Endothelial cell of umbilical vein (primary cell): ENCODE measurements at regions of chr2 and their contacts with region 1.

Region 1: GRCh38 chr2:20446917-20447436 is at the start of gene RHOB:
- DNase-seq: peak; percentile 99
- H3K4me3 ChIP-seq: peak within 1 kb of the TSS; percentile 66 to 96 (median 94)
- H3K27ac ChIP-seq: peak within 1 kb of the TSS; percentile 79
- H3K4me1 ChIP-seq: peaks cover 27% of the 10 kb centered on the region
- H3K27me3 ChIP-seq: no peaks in the 10 kb centered on the region
- CTCF ChIP-seq: no peak
- POLR2A ChIP-seq: peak; percentile 100
- total RNA-seq, gene RHOB: 830 and 937 TPM in 2 replicates

Region 2: DNA sequence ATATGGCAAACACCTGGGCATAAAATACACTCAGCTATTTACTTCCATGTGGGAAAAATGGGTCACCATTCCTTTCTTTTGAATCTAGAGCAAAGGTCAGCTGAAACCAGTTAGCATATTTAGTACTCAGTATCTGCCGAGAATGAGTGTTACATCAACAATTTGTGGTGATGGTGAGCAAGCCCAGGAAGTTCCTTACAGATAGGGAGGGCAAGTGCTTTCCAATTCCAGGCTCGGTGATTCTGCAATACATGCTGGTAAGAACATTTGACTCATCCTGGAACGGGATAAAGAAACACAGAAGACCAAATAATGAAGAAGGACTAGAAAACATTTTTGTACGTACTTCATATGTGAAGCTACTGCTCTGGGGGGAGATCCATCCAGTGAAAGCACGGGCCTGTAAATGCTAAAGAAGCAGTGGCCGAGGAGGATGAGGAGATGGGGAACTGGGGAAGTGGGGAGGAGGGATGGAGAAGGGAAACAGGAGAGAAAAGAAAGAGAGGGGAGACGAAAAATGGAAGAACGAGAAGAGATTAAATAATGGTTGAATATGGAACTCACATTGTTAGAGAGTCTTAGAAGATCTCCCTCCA is 797.1 kb before region 1 on chr2:
- CTCF ChIA-PET with region 1: no interaction called
- POLR2A ChIA-PET with region 1: no interaction called
- dilution Hi-C with region 1: no loop called
- intact Hi-C with region 1: no loop called
- DNase-seq: peak; percentile 22
- H3K4me3 ChIP-seq: no peak overlapping the region
- H3K27ac ChIP-seq: no peak overlapping the region
- H3K4me1 ChIP-seq: no peaks in the 10 kb centered on the region
- H3K27me3 ChIP-seq: no peaks in the 10 kb centered on the region
- CTCF ChIP-seq: no peak
- POLR2A ChIP-seq: no peak

Region 3: GRCh38 chr2:20398956-20399567 is 47.9 kb before region 1 on chr2:
- CTCF ChIA-PET with region 1: interaction called, 7 read pairs
- POLR2A ChIA-PET with region 1: no interaction called
- dilution Hi-C with region 1: no loop called
- intact Hi-C with region 1: loop called (anchors 1 kb)
- DNase-seq: no peak
- H3K4me3 ChIP-seq: no peak overlapping the region
- H3K27ac ChIP-seq: no peak overlapping the region
- H3K4me1 ChIP-seq: no peaks in the 10 kb centered on the region
- H3K27me3 ChIP-seq: peaks cover 21% of the 10 kb centered on the region in 2 experiments
- CTCF ChIP-seq: no peak
- POLR2A ChIP-seq: no peak

Region 4: GRCh38 chr2:20568501-20569463 is 121.8 kb after region 1 on chr2:
- CTCF ChIA-PET with region 1: interaction called, 78 read pairs
- POLR2A ChIA-PET with region 1: interaction called, 310 read pairs
- dilution Hi-C with region 1: no loop called
- intact Hi-C with region 1: loop called (anchors 1 kb)
- DNase-seq: peak; percentile 98
- H3K4me3 ChIP-seq: no peak overlapping the region
- H3K27ac ChIP-seq: peak overlapping the region; percentile 100
- H3K4me1 ChIP-seq: peaks cover 72% of the 10 kb centered on the region
- H3K27me3 ChIP-seq: no peaks in the 10 kb centered on the region
- CTCF ChIP-seq: no peak
- POLR2A ChIP-seq: peak; percentile 72

Region 5: DNA sequence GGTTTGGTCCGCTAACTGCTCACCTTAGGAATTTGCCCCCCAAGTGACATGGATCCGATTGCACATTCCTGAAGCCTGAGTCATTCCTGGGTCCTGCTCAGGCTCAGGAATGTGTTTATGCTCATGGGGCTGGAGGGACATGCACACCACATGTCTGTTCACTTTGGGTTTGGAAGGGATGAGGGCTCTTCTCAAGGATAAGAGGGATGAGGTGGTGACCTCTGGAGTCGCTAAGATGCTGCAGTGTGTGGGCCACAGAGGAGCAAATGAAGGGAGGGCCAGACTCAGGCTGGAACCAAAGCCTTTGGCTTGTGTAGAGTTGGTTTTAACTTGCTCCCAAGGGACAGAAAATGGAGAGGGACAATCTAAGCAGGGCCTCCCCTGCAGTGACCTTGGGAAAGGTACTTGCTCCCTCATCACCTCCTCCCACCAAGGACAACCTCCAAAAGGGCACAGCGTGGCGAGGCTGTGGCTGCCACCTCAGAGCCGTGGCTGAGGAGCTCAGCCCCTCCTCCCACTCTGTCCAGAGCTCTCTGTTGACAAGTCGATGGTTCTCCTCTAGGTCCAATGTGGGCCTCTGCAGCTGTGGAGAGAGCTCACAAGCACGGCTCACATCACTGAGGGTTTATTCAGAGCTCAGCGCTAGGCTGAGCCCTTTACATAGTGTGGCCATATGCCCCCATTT is 137.8 kb after region 1 on chr2:
- CTCF ChIA-PET with region 1: interaction called, 78 read pairs
- POLR2A ChIA-PET with region 1: interaction called, 310 read pairs
- dilution Hi-C with region 1: no loop called
- intact Hi-C with region 1: loop called (anchors 1 kb)
- DNase-seq: peak; percentile 89
- H3K4me3 ChIP-seq: no peak overlapping the region
- H3K27ac ChIP-seq: peak overlapping the region; percentile 76
- H3K4me1 ChIP-seq: peaks cover 43% of the 10 kb centered on the region
- H3K27me3 ChIP-seq: no peaks in the 10 kb centered on the region
- CTCF ChIP-seq: no peak
- POLR2A ChIP-seq: peak; percentile 24

Region 6: GRCh38 chr2:20611077-20611843 is 164.3 kb after region 1 on chr2:
- CTCF ChIA-PET with region 1: interaction called, 6 read pairs
- POLR2A ChIA-PET with region 1: interaction called, 14 read pairs
- dilution Hi-C with region 1: no loop called
- intact Hi-C with region 1: no loop called
- DNase-seq: peak; percentile 99
- H3K4me3 ChIP-seq: no peak overlapping the region
- H3K27ac ChIP-seq: peak overlapping the region; percentile 69
- H3K4me1 ChIP-seq: peaks cover 28% of the 10 kb centered on the region
- H3K27me3 ChIP-seq: no peaks in the 10 kb centered on the region
- CTCF ChIP-seq: no peak
- POLR2A ChIP-seq: no peak

Region 7: DNA sequence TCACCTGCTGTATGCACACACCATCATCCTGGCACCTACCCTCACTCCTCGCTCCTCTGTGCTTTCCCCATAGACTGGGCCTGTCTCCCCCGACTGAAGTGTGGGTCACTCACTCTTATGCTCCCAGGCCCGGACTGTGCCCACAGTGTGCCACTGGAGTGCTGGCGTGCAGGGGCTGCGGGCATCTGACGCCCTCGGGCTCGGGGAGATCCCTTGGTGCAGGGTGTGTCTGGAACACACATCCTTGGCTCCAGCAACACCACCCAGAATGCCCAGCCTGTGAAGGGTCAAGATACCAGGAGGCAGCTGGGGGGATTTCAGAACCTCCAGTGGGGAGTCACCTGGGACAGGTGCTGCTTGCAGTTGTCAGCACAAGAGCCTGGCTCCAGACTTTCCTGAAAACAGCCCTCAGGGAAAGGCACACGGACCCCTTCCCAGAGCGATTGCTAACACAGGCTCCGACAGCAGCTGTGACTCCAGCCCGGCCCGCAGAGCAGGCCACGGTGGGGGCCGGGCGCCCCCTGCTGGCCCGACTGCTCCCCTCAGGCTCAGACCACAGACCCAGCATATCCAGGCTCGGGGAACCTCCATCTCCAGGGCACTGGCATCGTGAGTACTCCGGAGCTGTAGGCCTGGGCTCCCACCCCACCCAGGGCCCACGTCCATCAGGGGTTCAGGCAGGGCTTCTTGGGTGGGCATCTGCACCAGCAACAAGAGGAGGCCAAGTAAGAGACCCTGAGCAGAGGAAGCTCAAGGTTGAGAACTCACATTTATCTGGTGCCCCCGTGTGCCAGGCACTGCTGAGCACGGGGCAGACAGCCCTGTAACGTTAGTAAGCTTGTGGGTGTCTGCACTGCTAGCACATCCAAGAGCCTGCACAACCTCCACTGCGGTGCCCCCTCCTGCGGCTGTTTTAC is 195.3 kb after region 1 on chr2:
- CTCF ChIA-PET with region 1: interaction called, 84 read pairs
- POLR2A ChIA-PET with region 1: interaction called, 12 read pairs
- dilution Hi-C with region 1: loop called (anchors 10 kb)
- intact Hi-C with region 1: loop called (anchors 1 kb)
- DNase-seq: peak; percentile 76
- H3K4me3 ChIP-seq: no peak overlapping the region
- H3K27ac ChIP-seq: no peak overlapping the region
- H3K4me1 ChIP-seq: peaks cover 8% of the 10 kb centered on the region
- H3K27me3 ChIP-seq: no peaks in the 10 kb centered on the region
- CTCF ChIP-seq: peak; percentile 98 to 99
- POLR2A ChIP-seq: no peak

Region 8: DNA sequence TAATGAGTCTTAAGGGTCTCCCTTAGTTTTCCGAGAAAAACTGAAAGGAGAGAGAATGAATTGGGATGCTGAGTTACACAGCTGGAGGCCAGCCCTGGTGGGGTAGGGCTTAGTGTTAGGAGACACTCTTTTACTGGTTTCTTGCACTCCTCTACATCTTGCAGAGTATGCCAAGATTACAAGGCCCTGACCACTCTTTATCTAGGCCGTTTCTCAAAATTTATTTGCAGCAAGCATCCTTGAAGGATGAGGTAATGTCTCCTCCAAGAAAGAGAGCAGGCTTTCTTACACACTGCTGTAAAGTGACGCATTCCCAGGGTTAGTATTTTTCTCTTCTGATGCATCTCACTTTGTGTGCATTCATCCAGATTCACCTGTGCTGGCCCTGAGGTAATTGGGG is 843.0 kb after region 1 on chr2:
- CTCF ChIA-PET with region 1: no interaction called
- POLR2A ChIA-PET with region 1: no interaction called
- dilution Hi-C with region 1: no loop called
- intact Hi-C with region 1: no loop called
- DNase-seq: no peak
- H3K4me3 ChIP-seq: no peak overlapping the region
- H3K27ac ChIP-seq: no peak overlapping the region
- H3K4me1 ChIP-seq: no peaks in the 10 kb centered on the region
- H3K27me3 ChIP-seq: no peaks in the 10 kb centered on the region
- CTCF ChIP-seq: no peak
- POLR2A ChIP-seq: no peak